GM12878 (cell line): ENCODE measurements at regions of chr3 and their contacts with region 1.

Region 1: DNA sequence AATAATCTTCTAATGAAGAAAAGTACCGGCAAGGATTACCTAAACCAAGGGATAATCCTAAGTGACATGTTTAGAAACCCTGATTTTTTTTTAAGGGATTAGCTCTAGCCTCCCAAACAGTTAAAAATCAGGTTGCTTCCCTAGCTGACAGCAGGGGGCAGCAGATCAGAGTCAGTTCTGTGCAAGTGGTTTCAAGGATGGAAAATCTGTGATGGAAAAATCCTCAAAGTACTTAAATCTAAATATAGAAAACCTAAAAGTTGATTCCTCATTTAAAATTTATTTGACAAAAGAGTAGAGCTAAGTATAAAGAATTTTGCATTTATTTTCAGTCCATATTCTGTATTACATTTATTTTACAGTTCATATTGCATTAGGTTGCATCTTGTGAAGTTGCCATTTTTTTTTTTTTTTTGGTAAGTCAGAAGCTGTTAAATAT is 107.6 kb downstream of the PEX5L start:
- DNase-seq: no peak
- ATAC-seq: peak; percentile 84
- H3K4me3 ChIP-seq: no peak overlapping the region
- H3K27ac ChIP-seq: no peak overlapping the region
- H3K4me1 ChIP-seq: no peaks in the 10 kb centered on the region; the same call in 1 of the 2 replicates
- H3K27me3 ChIP-seq: no peaks in the 10 kb centered on the region
- CTCF ChIP-seq: peak; percentile 70 to 79 (median 72)
- EP300 ChIP-seq: no peak
- POLR2A ChIP-seq: no peak
- RAD21 ChIP-seq: peak; percentile 92

Region 2: DNA sequence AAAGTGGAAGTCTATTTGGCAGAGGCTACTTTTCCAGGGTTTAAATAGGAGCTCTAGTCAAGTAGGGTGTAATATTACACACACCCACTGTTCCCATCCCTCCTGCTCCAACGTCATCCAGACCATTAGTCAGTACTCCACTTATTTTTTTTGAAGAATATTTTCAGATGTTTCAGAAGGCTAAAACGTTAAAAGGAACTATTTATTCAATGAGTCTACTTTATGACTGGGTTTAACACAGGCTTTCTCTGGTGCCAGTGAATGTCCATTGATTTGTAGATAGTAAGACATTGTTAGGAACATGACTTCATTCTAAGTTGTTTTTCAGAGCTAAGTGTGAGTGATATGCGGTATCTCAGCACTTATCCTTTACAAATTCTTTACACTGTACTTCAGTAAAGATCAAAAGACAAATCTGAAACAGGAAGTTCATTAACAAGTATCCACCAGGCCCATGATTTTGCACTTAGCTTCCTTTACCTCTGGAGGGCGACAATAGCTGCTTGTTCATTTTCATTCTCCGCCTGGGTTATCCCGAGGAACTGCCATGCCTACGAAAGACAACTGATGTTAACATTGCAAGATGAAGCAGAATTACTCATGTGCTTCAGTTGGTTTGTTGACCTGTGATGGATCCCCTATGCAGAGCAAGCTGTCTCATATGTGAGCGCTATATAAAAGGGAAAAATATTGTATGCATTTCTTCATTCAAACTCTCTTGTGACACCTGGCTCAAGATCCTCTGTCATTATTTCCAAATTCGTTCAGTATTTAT is 117.6 kb before region 1 on chr3:
- CTCF ChIA-PET with region 1: interaction called, 47 read pairs
- POLR2A ChIA-PET with region 1: no interaction called
- RAD21 ChIA-PET with region 1: interaction called, 35 read pairs
- SMC1A ChIA-PET with region 1: interaction called, 30 read pairs
- in situ Hi-C with region 1: no loop called
- intact Hi-C with region 1: loop called (anchors 2 kb)
- DNase-seq: peak; percentile 40
- ATAC-seq: peak; percentile 94
- H3K4me3 ChIP-seq: no peak overlapping the region
- H3K27ac ChIP-seq: no peak overlapping the region
- H3K4me1 ChIP-seq: no peaks in the 10 kb centered on the region
- H3K27me3 ChIP-seq: no peaks in the 10 kb centered on the region
- CTCF ChIP-seq: peak; percentile 63 to 83 (median 78); a peak in 5 of 6 replicates
- EP300 ChIP-seq: no peak
- POLR2A ChIP-seq: no peak
- RAD21 ChIP-seq: peak; percentile 97

Region 3: DNA sequence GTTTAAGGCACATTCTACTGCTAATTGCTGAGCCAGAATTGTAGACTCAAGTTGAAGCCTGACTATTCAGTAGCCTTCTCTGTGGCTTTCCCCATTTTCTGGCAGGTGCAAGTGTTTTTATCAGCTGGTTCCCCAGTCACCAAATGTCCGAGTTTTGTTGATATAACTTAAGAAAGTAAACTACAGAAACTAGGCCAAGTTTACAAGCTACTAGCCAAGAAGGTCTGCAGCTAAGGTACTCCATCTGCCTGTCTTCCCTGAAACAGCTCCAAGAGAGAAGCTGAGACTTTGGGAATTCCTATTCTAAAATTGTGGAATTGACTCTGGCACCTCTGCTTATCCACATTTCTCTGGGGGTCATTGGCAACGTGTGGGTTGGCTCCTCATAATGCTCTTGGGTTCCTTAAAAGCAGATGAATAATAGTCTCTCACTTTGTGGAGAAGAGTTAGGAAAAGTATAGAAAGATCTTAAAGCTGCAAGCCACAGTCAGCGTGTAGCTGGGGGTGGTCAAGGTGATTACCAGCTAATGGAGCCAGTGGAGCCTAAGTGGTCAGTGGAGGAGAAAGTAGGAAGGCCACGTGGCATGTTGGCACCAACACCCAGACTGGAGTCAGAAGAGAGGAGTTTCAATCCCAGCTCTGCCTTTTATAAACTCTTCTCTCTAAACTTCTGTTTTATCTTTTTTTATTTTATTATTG is 21.2 kb before region 1 on chr3:
- CTCF ChIA-PET with region 1: interaction called, 11 read pairs
- POLR2A ChIA-PET with region 1: no interaction called
- RAD21 ChIA-PET with region 1: interaction called, 4 read pairs
- SMC1A ChIA-PET with region 1: interaction called, 5 read pairs
- in situ Hi-C with region 1: no loop called
- intact Hi-C with region 1: no loop called
- DNase-seq: no peak
- ATAC-seq: no peak
- H3K4me3 ChIP-seq: no peak overlapping the region
- H3K27ac ChIP-seq: no peak overlapping the region
- H3K4me1 ChIP-seq: no peaks in the 10 kb centered on the region
- H3K27me3 ChIP-seq: no peaks in the 10 kb centered on the region
- CTCF ChIP-seq: no peak
- EP300 ChIP-seq: no peak
- POLR2A ChIP-seq: no peak
- RAD21 ChIP-seq: no peak

Region 4: GRCh38 chr3:179967622-179968021 is 38.5 kb after region 1 on chr3:
- CTCF ChIA-PET with region 1: interaction called, 20 read pairs
- POLR2A ChIA-PET with region 1: interaction called, 3 read pairs
- RAD21 ChIA-PET with region 1: interaction called, 17 read pairs
- SMC1A ChIA-PET with region 1: interaction called, 22 read pairs
- in situ Hi-C with region 1: no loop called
- intact Hi-C with region 1: no loop called
- DNase-seq: no peak
- ATAC-seq: peak; percentile 79
- H3K4me3 ChIP-seq: peak overlapping the region; percentile 10; the same call in 1 of the 2 replicates
- H3K27ac ChIP-seq: peak overlapping the region; percentile 30; the same call in 1 of the 2 replicates
- H3K4me1 ChIP-seq: peaks cover under 1% of the 10 kb centered on the region; the same call in 1 of the 2 replicates
- H3K27me3 ChIP-seq: no peaks in the 10 kb centered on the region
- CTCF ChIP-seq: no peak
- EP300 ChIP-seq: no peak
- POLR2A ChIP-seq: no peak
- RAD21 ChIP-seq: no peak

Region 5: DNA sequence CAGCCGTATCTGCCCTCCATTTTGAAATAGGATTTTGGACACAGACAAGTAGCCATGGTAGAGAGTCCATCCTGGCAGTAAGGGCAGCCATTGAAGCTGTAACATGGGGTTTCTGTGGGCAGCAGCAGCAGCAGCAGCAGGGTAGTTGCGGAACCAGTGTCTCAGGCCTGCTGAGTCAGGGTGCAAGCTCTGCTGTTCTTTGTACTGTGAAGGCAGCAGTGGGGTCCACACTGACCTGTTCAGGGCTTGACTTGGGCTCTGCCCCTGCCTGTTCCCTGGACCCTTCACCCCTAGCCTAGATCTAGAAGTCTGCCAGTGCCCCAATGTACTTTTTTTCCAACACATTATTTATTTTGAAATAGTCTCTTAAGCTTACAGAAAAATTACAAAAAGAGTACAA is 97.9 kb after region 1 on chr3:
- CTCF ChIA-PET with region 1: interaction called, 11 read pairs
- POLR2A ChIA-PET with region 1: no interaction called
- RAD21 ChIA-PET with region 1: interaction called, 10 read pairs
- SMC1A ChIA-PET with region 1: interaction called, 14 read pairs
- in situ Hi-C with region 1: no loop called
- intact Hi-C with region 1: no loop called
- DNase-seq: no peak
- ATAC-seq: no peak
- H3K4me3 ChIP-seq: no peak overlapping the region
- H3K27ac ChIP-seq: no peak overlapping the region
- H3K4me1 ChIP-seq: no peaks in the 10 kb centered on the region
- H3K27me3 ChIP-seq: no peaks in the 10 kb centered on the region
- CTCF ChIP-seq: no peak
- EP300 ChIP-seq: no peak
- POLR2A ChIP-seq: no peak
- RAD21 ChIP-seq: no peak

Region 6: DNA sequence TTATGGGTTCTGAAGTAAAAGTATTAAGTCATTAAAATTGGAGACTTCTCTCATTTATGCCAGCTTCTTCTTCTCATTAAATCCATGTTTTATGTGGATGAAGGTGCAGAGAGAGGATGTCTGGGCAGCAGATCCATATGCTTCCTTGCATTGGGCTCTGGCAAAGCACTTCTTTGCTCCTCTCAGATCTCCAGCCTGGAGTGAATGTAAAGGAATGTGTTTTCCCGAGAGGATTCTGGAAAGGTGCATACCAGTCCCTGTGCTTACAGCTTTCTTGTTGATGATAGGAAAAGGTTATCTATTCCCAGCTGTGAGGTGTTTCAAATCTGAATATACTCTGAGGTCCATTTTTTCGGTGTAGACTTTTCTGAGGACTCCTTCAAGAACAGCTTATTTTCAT is 187.5 kb after region 1 on chr3:
- CTCF ChIA-PET with region 1: interaction called, 10 read pairs
- POLR2A ChIA-PET with region 1: no interaction called
- RAD21 ChIA-PET with region 1: interaction called, 3 read pairs
- SMC1A ChIA-PET with region 1: interaction called, 3 read pairs
- in situ Hi-C with region 1: no loop called
- intact Hi-C with region 1: no loop called
- DNase-seq: no peak
- ATAC-seq: no peak
- H3K4me3 ChIP-seq: no peak overlapping the region
- H3K27ac ChIP-seq: no peak overlapping the region
- H3K4me1 ChIP-seq: no peaks in the 10 kb centered on the region
- H3K27me3 ChIP-seq: no peaks in the 10 kb centered on the region
- CTCF ChIP-seq: no peak
- EP300 ChIP-seq: no peak
- POLR2A ChIP-seq: no peak
- RAD21 ChIP-seq: no peak